ENCODE measurements at regions of chr15 and their contacts with region 1.

Region 1: GRCh38 chr15:55056500-55056899 is 140.2 kb downstream of the RSL24D1 start:
- DNase-seq: no peak
- H3K4me3 ChIP-seq: no peak overlapping the region
- H3K27ac ChIP-seq: no peak overlapping the region
- H3K4me1 ChIP-seq: no peaks in the 10 kb centered on the region
- H3K27me3 ChIP-seq: no peaks in the 10 kb centered on the region
- CTCF ChIP-seq: no peak

Region 2: DNA sequence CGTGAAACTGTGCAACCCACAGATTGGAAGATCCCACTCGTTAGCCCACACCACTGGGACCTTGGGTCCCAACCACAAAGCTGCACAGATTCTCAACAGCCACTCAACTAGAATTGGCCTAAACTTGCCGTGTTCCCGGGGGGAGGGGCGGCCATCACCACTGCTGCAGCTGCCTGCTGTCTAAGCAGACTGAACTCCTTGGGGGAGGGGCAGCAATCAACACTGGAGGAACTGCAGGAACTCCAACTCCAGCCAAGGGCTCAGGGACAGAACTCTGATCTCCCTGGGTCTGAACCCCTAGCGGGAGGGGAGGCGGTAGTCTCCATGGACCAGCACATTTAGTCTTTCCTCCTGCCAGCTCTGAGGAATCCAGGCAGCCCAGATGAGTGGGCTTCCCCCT is 65.7 kb before region 1 on chr15:
- intact Hi-C with region 1: loop called (anchors 10 kb)
- DNase-seq: no peak
- H3K4me3 ChIP-seq: no peak overlapping the region
- H3K27ac ChIP-seq: no peak overlapping the region
- H3K4me1 ChIP-seq: no peaks in the 10 kb centered on the region
- H3K27me3 ChIP-seq: no peaks in the 10 kb centered on the region
- CTCF ChIP-seq: no peak

Region 3: GRCh38 chr15:55168329-55168974 is 112.0 kb after region 1 on chr15:
- intact Hi-C with region 1: no loop called
- DNase-seq: no peak
- H3K4me3 ChIP-seq: no peak overlapping the region
- H3K27ac ChIP-seq: no peak overlapping the region
- H3K4me1 ChIP-seq: no peaks in the 10 kb centered on the region
- H3K27me3 ChIP-seq: no peaks in the 10 kb centered on the region
- CTCF ChIP-seq: peak; percentile 50 to 84 (median 62)

Measured in ascending aorta (tissue), 2 donors.